ENCODE measurements at regions of chr14 and their contacts with region 1.

Region 1: DNA sequence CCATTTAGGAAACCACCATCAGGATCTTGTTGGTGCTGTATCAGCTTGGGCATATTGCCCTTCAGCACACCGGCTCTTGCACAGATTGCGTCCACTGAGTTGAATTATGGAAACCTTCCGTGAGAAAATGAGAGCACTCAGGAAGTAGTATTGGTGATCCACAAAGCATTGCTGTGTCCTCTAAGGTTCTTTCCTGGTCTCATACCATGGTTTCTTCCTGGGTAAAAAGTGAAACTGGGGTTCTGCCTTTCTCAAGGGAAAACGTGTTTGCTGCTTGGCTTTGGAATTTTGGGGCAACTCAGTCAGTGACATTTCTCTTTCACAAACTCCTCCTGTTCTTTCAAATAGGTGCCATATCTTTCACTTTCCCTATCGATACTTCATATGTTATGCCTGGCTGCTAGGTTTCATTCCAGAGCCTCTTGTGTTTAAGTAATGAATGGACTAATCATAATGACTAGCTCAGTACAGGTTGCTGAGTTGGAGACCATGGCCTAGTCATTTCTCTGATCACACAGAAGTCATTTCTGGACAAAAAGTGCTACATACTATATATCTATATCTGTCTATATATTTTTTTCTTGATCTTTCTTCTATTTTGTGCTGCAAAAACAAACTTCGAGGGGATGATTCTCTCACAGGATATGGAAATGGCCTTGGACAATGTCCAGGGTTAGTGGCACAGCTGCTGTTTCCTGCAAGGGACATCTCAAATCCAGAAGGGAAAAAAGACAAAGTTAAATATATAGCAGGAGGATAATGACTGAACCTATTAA is 423.4 kb downstream of the ZFP36L1 start:
- DNase-seq: peak; percentile 52
- ATAC-seq: peak; percentile 4
- H3K4me3 ChIP-seq: peak overlapping the region in 4 of 5 experiments; percentile 1 to 20 (median 14)
- H3K4me3 Mint-ChIP-seq: peak overlapping the region; percentile 73
- H3K27ac ChIP-seq: peak overlapping the region; percentile 78 to 84
- H3K27ac Mint-ChIP-seq: peak overlapping the region; percentile 97
- H3K4me1 ChIP-seq: peaks cover 78 to 92% of the 10 kb centered on the region in 2 donors
- H3K4me1 Mint-ChIP-seq: peaks cover 93% of the 10 kb centered on the region
- H3K27me3 ChIP-seq: no peaks in the 10 kb centered on the region
- H3K27me3 Mint-ChIP-seq: no peaks in the 10 kb centered on the region
- CTCF ChIP-seq: no peak

Region 2: DNA sequence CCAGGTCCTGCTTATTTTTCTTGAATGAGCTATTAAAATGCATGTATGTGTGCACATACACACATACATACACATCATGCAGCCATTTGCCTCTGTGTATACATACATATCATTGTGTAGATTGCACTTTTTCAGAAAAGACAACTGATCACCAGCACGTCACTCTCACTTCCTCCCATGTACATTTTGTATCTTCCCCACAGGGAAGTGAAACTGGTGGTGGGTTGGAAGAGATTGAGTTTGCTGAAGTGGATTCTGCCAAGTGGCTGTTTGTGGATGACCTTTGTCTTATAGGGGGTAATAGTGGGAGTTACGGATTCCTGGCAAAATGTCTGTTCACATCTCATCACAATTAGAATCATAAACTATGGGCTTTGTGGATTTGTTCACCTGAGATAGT is 101.3 kb before region 1 on chr14:
- CTCF ChIA-PET with region 1: interaction called, 4 read pairs
- POLR2A ChIA-PET with region 1: no interaction called
- intact Hi-C with region 1: loop called (anchors 5 kb)
- DNase-seq: peak; percentile 92
- ATAC-seq: peak; percentile 71
- H3K4me3 ChIP-seq: peak overlapping the region in 1 of 5 experiments; percentile 14
- H3K4me3 Mint-ChIP-seq: peak overlapping the region; percentile 72
- H3K27ac ChIP-seq: peak overlapping the region; percentile 78 to 94
- H3K27ac Mint-ChIP-seq: peak overlapping the region; percentile 95
- H3K4me1 ChIP-seq: peaks cover 78 to 89% of the 10 kb centered on the region in 2 donors
- H3K4me1 Mint-ChIP-seq: peaks cover 80% of the 10 kb centered on the region
- H3K27me3 ChIP-seq: no peaks in the 10 kb centered on the region
- H3K27me3 Mint-ChIP-seq: no peaks in the 10 kb centered on the region
- CTCF ChIP-seq: no peak

Measured in B cell (primary cell).